IMR-90 (cell line): ENCODE measurements at regions of chr19 and their contacts with region 1.

Region 1: GRCh38 chr19:13774217-13775191 is at the start of gene C19orf53:
- DNase-seq: peak; percentile 94
- ATAC-seq: peak; percentile 98
- H3K4me3 ChIP-seq: peak within 1 kb of the TSS; percentile 78
- H3K27ac ChIP-seq: peak within 1 kb of the TSS; percentile 82
- H3K4me1 ChIP-seq: peaks cover 7% of the 10 kb centered on the region; the same call in 1 of the 2 replicates
- H3K27me3 ChIP-seq: no peaks in the 10 kb centered on the region
- CTCF ChIP-seq: no peak
- POLR2A ChIP-seq: peak; percentile 74; the same call in 1 of the 2 replicates
- RAD21 ChIP-seq: no peak
- total RNA-seq, gene C19orf53: 61.3 and 68.3 TPM in 2 replicates

Region 2: GRCh38 chr19:13794757-13795589 is 20.5 kb after region 1 on chr19 and contains the start of gene ZSWIM4:
- CTCF ChIA-PET with region 1: interaction called, 4 read pairs
- POLR2A ChIA-PET with region 1: no interaction called
- dilution Hi-C with region 1: no loop called
- in situ Hi-C with region 1: no loop called
- intact Hi-C with region 1: loop called (anchors 1 kb)
- DNase-seq: peak; percentile 99
- ATAC-seq: peak; percentile 89
- H3K4me3 ChIP-seq: peak within 1 kb of the TSS; percentile 86
- H3K27ac ChIP-seq: peak within 1 kb of the TSS; percentile 95
- H3K4me1 ChIP-seq: peaks cover 7% of the 10 kb centered on the region
- H3K27me3 ChIP-seq: no peaks in the 10 kb centered on the region
- CTCF ChIP-seq: no peak
- POLR2A ChIP-seq: peak; percentile 78
- RAD21 ChIP-seq: no peak
- total RNA-seq, gene ZSWIM4: 1.9 and 2.2 TPM in 2 replicates

Region 3: DNA sequence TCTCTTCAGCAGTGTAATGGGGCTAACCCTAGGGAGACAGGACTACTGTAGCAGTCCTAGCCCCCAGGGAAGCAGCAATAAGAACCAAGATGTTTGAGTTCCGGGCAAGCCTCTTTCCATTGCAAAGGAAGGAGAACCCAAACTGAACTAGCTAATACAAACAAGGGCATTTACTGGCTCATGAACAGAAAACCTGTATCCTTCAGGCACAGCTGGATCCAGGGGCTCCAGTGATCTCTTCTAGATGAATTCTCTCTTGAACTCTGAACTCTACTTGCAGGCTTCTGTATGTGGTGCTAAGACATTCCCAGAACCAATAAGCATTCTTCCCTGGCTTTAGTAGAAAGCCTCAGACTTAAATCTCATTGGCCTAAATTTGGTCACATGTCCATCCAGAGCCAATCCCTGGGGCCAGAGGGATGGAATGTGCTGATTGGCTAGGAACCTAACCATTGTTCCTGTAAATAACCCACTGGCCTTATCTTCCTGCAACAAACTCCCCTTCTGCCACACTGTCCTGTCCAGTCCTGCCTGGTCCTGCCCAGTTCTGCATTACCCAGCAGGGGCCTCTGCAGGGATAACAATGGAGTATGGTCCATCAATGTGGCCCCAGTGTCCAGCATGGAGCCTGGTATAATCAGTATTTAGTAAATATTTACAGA is 167.7 kb after region 1 on chr19:
- CTCF ChIA-PET with region 1: no interaction called
- POLR2A ChIA-PET with region 1: no interaction called
- dilution Hi-C with region 1: no loop called
- in situ Hi-C with region 1: no loop called
- intact Hi-C with region 1: no loop called
- DNase-seq: no peak
- ATAC-seq: no peak
- H3K4me3 ChIP-seq: no peak overlapping the region
- H3K27ac ChIP-seq: no peak overlapping the region
- H3K4me1 ChIP-seq: peaks cover 5% of the 10 kb centered on the region
- H3K27me3 ChIP-seq: no peaks in the 10 kb centered on the region; the same call in 1 of the 2 replicates
- CTCF ChIP-seq: no peak
- POLR2A ChIP-seq: no peak
- RAD21 ChIP-seq: no peak

Region 4: DNA sequence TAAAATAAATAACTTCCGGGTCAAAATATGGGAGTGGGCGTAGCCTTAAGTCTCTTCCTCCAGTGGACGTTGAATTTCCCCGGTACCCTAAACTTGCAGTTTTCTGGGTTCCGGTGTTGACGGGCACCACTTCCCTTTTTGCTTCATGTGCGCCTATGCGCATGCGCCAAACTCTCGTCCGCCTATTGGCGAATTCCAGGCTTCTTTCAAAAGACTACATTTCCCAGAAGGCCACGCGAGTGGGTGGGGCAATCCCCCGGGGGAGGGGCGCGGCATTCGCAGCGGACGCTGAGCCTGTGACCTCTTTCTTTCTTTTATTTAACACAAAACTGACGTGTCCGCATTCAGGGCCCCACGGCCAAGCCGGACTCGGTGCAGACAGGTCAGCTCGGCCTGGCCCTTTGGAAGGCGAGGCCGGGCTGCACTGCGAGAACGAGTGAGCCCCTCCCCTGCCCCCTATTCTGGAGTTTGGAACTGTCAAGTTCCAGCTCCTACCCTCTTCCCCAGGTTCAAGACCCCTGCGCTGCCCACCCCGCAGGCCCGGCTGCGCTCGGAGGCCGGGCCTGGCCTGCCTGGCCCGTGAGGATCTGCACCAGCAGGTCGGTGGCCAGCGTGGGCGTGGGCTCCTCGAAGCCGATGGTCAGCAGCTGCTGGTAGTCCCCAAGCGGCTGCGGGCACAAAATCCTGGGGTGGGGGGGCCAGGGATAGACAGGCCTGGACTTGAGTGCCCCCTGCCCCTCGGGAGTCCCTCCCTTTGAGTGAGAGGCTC is 307.0 kb after region 1 on chr19:
- CTCF ChIA-PET with region 1: no interaction called
- POLR2A ChIA-PET with region 1: no interaction called
- dilution Hi-C with region 1: no loop called
- in situ Hi-C with region 1: loop called (anchors 25 kb)
- intact Hi-C with region 1: no loop called
- DNase-seq: peak; percentile 99
- ATAC-seq: peak; percentile 95
- H3K4me3 ChIP-seq: peak overlapping the region; percentile 67
- H3K27ac ChIP-seq: peak overlapping the region; percentile 77
- H3K4me1 ChIP-seq: peaks cover 8% of the 10 kb centered on the region
- H3K27me3 ChIP-seq: no peaks in the 10 kb centered on the region
- CTCF ChIP-seq: no peak
- POLR2A ChIP-seq: peak; percentile 81
- RAD21 ChIP-seq: no peak